Prostate gland (tissue), 2 donors: ENCODE measurements at regions of chr2 and their contacts with region 1.

Region 1: GRCh38 chr2:227890495-227891079 is 19.2 kb downstream of the DAW1 start:
- DNase-seq: no peak
- H3K4me3 ChIP-seq: no peak overlapping the region
- H3K27ac ChIP-seq: no peak overlapping the region
- H3K4me1 ChIP-seq: no peaks in the 10 kb centered on the region
- H3K27me3 ChIP-seq: no peaks in the 10 kb centered on the region
- CTCF ChIP-seq: peak in 3 of 4 experiments; percentile 58 to 64 (median 60)
- POLR2A ChIP-seq: no peak

Region 2: DNA sequence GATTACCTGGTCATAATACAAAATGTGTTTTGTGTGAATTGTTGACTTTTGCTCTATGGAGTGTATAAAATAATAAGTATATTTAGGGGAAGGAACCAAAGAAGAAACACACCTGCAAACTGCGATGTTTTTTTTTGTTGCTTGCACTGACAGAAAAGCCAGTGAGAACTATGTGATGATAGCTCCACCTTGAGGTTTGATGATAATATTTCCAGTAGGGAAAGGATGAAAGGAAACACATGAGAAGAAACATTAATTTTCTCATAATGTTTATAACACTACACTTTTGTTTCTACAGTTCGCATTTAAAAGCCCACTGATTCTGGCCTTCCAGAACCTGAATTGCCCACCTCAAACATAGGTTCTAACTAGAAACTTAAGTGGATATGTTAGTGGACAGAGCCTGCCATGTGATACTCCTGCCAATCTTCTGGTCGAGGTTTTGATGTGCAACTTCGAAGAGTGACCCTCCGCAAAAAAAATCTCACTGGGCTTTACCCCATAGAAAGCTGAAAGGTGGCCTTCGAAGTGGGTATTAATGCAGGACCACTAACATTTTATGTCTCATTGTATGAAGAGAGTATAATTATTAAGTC is 767.3 kb after region 1 on chr2:
- intact Hi-C with region 1: loop called (anchors 10 kb)
- DNase-seq: no peak
- H3K4me3 ChIP-seq: no peak overlapping the region
- H3K27ac ChIP-seq: no peak overlapping the region
- H3K4me1 ChIP-seq: no peaks in the 10 kb centered on the region
- H3K27me3 ChIP-seq: no peaks in the 10 kb centered on the region
- CTCF ChIP-seq: peak in 2 of 4 experiments; percentile 28 to 31
- POLR2A ChIP-seq: no peak